H1 (cell line): ENCODE measurements at regions of chr1 and their contacts with region 1.

Region 1: DNA sequence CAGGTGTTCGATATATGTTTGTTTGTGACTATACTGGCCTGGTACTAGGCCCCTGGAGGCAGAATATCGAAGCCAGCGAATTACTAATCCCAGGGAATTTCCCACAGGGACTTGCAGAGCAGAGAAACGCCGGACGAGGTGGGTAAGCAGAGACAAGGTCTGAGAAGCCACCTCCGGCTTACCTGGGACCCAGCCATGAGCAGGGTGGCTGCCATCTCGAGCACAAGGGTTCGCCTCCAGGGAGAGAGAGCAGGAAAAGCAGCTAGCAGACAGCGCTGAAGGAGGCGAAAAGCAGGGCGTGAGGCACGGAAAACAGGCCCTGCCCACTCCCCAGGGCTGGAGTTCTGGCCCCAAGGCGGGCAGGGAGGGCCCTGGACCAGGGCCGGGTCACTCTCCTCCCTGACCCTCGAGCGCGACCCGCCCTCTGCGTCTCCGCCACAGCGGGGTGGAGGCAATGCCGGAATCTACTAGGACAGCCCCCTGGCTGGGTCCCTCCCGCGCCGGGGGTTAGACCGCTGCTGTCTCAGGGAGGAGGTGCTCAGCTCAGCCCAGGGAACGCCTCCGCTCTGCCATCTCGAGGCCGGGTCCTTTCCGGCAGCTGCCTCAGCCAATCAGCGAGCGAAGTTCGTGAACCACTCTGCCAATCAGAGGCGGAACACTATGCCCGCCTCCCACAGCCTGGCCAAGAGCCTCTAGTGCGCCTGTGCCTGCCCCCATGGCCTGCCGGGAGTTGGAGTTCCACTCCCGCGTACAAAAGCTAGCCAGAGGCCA is 1.7 kb downstream of the ZNF436 start:
- DNase-seq: peak; percentile 94 to 96
- H3K4me3 ChIP-seq: peak overlapping the region; percentile 74 to 95 (median 83)
- H3K27ac ChIP-seq: no peak overlapping the region
- H3K4me1 ChIP-seq: peaks cover 2 to 11% (median 4%) of the 10 kb centered on the region in 4 experiments; a peak in 6 of 7 replicates
- H3K27me3 ChIP-seq: peaks cover 44 to 80% (median 67%) of the 10 kb centered on the region in 4 experiments
- CTCF ChIP-seq: no peak
- EP300 ChIP-seq: no peak
- POLR2A ChIP-seq: no peak
- RAD21 ChIP-seq: no peak

Region 2: DNA sequence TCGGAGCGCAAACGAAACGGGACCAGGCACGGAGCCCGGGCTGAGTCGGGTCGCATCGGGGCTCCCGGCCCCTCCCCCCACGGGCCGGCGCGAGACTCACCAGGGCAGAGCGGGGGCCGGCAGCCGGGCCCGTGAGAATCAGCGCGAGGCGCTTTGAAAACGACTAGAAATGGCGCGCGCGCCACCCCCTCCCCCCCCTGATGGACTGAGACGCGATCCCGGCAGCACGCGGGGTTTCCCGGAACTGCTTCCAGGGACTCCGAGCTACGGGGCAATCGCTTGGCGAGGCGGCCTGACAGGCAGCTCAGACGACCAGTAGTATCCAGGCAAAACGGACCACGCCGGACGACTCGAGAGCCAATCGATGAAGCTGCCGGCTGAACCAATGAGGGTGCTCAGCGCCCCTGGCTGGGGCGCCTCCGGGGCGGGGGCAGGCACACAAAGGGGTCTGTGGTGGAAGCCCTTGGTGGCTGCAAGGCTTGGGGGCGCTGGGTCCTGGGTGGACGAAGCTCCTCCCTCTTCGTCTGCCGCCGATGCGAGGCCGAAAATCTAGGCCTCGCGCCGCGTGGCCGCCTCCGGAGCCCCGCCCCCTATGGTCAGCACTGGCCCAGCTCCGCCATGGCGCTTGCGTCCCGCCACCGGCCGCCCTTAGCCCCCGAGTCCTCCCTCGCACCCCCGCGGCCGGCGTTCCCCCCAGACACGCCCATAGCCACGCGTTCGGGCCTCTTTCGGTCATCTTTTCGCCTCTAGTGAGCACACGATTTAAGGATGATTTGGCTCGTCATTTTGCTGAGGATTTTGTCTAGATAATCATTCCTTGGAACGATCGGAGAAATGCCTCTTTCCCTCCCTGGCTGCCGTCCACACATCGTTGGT is 23.6 kb before region 1 on chr1 and contains the start of gene HNRNPR:
- CTCF ChIA-PET with region 1: no interaction called
- POLR2A ChIA-PET with region 1: interaction called, 23 read pairs
- DNase-seq: peak; percentile 99 to 100
- H3K4me3 ChIP-seq: peak within 1 kb of the TSS; percentile 87 to 91 (median 90)
- H3K27ac ChIP-seq: peak within 1 kb of the TSS; percentile 85
- H3K4me1 ChIP-seq: peaks cover 0 to 8% (median 3%) of the 10 kb centered on the region in 4 experiments; a peak in 1 of 7 replicates
- H3K27me3 ChIP-seq: peaks cover 2 to 29% (median 15%) of the 10 kb centered on the region in 4 experiments
- CTCF ChIP-seq: no peak
- EP300 ChIP-seq: no peak
- POLR2A ChIP-seq: peak in 1 of 2 experiments; percentile 87; a peak in 2 of 3 replicates
- RAD21 ChIP-seq: no peak
- total RNA-seq, gene HNRNPR: 203 and 214 TPM in 2 replicates

Region 3: DNA sequence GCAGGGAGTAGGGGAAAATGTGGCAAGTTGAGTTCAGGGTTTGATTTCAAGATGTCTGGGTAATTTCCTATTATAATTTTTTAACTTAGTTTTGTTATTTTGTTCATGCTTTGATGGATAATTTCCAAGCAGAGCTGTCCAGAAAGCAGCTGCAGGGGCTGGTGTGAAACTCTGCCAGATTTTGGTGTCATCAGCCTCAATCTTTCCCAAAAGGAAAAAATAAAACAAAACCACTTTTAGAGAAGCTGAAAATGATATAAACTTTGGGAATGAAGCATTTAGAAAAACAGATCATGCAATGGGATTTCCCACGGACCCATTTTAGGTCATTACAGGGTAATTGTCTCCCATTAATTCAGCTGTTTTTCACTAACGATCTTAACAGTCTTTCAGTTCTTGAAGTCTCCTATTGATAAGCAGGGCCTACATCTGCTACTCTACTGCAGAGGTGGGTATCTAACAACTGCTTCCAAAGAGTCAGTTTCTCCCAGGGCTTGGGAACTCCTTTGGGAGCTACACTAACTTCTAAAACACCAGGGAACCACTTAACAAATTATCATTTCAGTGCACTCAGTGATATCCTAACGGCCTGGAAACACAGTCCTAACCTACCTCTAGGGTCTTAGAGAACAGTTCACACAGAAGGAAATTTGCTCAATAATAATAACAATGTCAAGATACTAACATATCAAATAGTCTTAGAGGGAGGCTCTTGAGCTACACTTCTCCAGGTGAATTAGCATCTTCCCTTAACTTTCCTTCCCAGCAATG is 10.7 kb before region 1 on chr1:
- CTCF ChIA-PET with region 1: interaction called, 7 read pairs
- POLR2A ChIA-PET with region 1: interaction called, 17 read pairs
- DNase-seq: peak in 1 of 2 experiments; percentile 54
- H3K4me3 ChIP-seq: no peak overlapping the region
- H3K27ac ChIP-seq: no peak overlapping the region
- H3K4me1 ChIP-seq: no peaks in the 10 kb centered on the region
- H3K27me3 ChIP-seq: peaks cover 79 to 99% (median 93%) of the 10 kb centered on the region in 4 experiments
- CTCF ChIP-seq: no peak
- EP300 ChIP-seq: peak in 1 of 2 experiments; percentile 89; a peak in 1 of 3 replicates
- POLR2A ChIP-seq: no peak
- RAD21 ChIP-seq: 0 out of 4 replicates have a peak, but pooled peaks of 1 of the 2 experiments have one; percentile 0

Region 4: GRCh38 chr1:23394684-23395083 is 26.7 kb after region 1 on chr1:
- CTCF ChIA-PET with region 1: interaction called, 19 read pairs
- POLR2A ChIA-PET with region 1: interaction called, 4 read pairs
- DNase-seq: peak in 1 of 2 experiments; percentile 51
- H3K4me3 ChIP-seq: peak overlapping the region in 1 of 4 experiments; percentile 2; a peak in 1 of 8 replicates
- H3K27ac ChIP-seq: no peak overlapping the region
- H3K4me1 ChIP-seq: peaks cover 0 to 10% (median 4%) of the 10 kb centered on the region in 4 experiments; a peak in 6 of 7 replicates
- H3K27me3 ChIP-seq: peaks cover 30 to 84% (median 59%) of the 10 kb centered on the region in 4 experiments
- CTCF ChIP-seq: no peak
- EP300 ChIP-seq: no peak
- POLR2A ChIP-seq: no peak
- RAD21 ChIP-seq: 0 out of 4 replicates have a peak, but pooled peaks of 1 of the 2 experiments have one; percentile 4